Activated CD8-positive, alpha-beta T cell treated with anti-CD3 and anti-CD28 coated beads, Interleukin-2, amount 10 ng/mL, durations not matched to agents 7 days and 5 days (primary cell): ENCODE measurements at regions of chr7 and their contacts with region 1.

Region 1: DNA sequence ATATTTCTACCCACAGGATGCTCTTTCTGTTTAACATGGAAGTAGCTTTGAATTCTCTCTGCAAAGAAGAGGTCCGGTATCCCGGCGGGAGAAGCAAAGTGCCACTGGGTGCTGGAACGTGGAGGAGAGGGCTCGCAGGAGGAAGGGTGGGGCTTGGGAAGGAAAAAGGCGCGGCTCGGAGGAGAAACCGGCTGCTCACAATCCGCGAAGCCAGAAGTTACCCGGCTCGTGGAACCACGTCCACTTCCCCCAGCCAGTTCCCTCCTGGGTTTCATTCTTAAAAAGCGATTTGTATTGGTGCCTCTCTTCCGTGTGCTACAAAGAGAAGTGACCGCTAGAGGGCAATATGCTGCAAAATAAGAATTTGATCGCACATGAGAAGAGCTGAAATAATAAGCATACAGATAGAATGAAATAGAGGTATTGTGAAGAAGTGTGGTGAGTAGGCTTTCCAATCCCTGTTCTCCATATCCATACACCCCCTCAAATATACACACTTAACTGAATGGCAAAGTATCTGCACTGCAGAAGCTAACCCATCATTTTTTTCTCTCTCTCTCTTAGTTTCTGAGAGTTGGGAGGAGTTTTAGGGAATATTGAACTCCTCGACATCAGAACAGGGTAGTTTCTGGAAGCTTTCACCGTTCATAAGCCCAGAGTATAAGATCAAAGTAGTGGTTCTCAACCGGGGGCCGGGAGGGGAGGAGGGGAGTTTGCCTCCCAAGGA is 31.1 kb downstream of the TRIL start:
- DNase-seq: peak; percentile 76
- ATAC-seq: peak; percentile 98
- H3K4me3 Mint-ChIP-seq: peak overlapping the region; percentile 76
- H3K27ac Mint-ChIP-seq: no peak overlapping the region
- H3K4me1 Mint-ChIP-seq: peaks cover 20% of the 10 kb centered on the region
- H3K27me3 Mint-ChIP-seq: peaks cover 17% of the 10 kb centered on the region

Region 2: GRCh38 chr7:28939844-28940544 is 13.0 kb after region 1 on chr7:
- CTCF ChIA-PET with region 1: interaction called, 12 read pairs
- POLR2A ChIA-PET with region 1: interaction called, 3 read pairs
- DNase-seq: no peak
- ATAC-seq: no peak
- H3K4me3 Mint-ChIP-seq: no peak overlapping the region
- H3K27ac Mint-ChIP-seq: no peak overlapping the region
- H3K4me1 Mint-ChIP-seq: no peaks in the 10 kb centered on the region
- H3K27me3 Mint-ChIP-seq: peaks cover 4% of the 10 kb centered on the region

Region 3: GRCh38 chr7:29077854-29078253 is 150.8 kb after region 1 on chr7:
- CTCF ChIA-PET with region 1: interaction called, 10 read pairs
- POLR2A ChIA-PET with region 1: no interaction called
- DNase-seq: no peak
- ATAC-seq: no peak
- H3K4me3 Mint-ChIP-seq: no peak overlapping the region
- H3K27ac Mint-ChIP-seq: no peak overlapping the region
- H3K4me1 Mint-ChIP-seq: no peaks in the 10 kb centered on the region
- H3K27me3 Mint-ChIP-seq: peaks cover 24% of the 10 kb centered on the region

Region 4: DNA sequence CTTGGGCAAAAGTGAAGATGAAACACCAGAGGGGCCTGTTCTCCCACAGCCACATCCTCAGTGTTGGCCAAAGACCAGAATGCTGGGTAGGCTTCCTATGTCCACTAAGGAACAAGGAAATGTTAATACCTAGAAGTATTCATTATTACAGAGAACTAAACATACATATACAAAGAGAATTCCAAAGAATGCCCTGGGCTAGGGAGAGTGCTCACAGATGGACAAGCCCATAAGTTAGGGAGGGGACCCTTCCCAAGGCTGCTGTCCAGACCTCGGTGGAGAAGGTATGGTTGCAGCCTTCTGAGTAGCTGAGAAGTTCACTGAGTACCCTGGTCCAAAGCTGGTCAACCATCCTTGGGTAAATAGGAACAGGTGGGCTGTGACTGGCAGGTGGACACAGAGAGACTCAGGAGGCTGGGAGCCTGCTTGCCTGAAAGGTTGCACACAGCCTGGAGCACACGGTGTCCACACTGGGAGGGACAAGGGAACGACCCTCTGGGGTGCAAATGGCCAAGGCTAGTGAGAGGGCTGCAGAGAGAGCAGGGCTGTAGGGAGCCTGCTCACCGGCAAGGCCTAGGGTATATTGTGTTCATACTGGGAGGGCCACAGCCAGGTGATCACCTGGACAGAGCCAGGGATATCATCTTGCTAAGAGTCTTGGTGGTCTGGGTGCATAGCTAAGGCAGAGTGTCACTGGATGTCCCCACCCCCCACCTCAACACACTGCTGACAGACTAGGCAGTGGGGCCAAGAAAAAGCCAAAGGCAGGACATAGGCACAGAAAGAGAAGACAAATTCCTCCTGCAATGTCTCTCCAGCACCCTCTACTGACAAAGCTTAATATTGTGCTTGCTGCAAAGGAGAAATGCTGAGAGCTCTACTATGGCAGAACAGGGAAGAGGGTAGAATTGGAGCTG is 179.0 kb after region 1 on chr7:
- CTCF ChIA-PET with region 1: interaction called, 279 read pairs
- POLR2A ChIA-PET with region 1: no interaction called
- DNase-seq: peak; percentile 42
- ATAC-seq: peak; percentile 74
- H3K4me3 Mint-ChIP-seq: no peak overlapping the region
- H3K27ac Mint-ChIP-seq: no peak overlapping the region
- H3K4me1 Mint-ChIP-seq: peaks cover 2% of the 10 kb centered on the region
- H3K27me3 Mint-ChIP-seq: peaks cover 7% of the 10 kb centered on the region

Region 5: GRCh38 chr7:29408841-29409243 is 481.8 kb after region 1 on chr7:
- CTCF ChIA-PET with region 1: interaction called, 70 read pairs
- POLR2A ChIA-PET with region 1: no interaction called
- DNase-seq: peak; percentile 71
- ATAC-seq: peak; percentile 58
- H3K4me3 Mint-ChIP-seq: no peak overlapping the region
- H3K27ac Mint-ChIP-seq: no peak overlapping the region
- H3K4me1 Mint-ChIP-seq: no peaks in the 10 kb centered on the region
- H3K27me3 Mint-ChIP-seq: no peaks in the 10 kb centered on the region